B cell (primary cell): ENCODE measurements at regions of chr6 and their contacts with region 1.

Region 1: GRCh38 chr6:13979284-13980171 is 54.8 kb downstream of the RNF182 start:
- DNase-seq: no peak
- ATAC-seq: no peak
- H3K4me3 ChIP-seq: no peak overlapping the region
- H3K4me3 Mint-ChIP-seq: no peak overlapping the region
- H3K27ac ChIP-seq: no peak overlapping the region
- H3K27ac Mint-ChIP-seq: no peak overlapping the region
- H3K4me1 ChIP-seq: no peaks in the 10 kb centered on the region
- H3K4me1 Mint-ChIP-seq: no peaks in the 10 kb centered on the region
- H3K27me3 ChIP-seq: peaks cover 0 to 13% (median 6%) of the 10 kb centered on the region in 4 experiments
- H3K27me3 Mint-ChIP-seq: peaks cover 46% of the 10 kb centered on the region
- CTCF ChIP-seq: no peak

Region 2: GRCh38 chr6:13653296-13653695 is 326.2 kb before region 1 on chr6:
- CTCF ChIA-PET with region 1: no interaction called
- POLR2A ChIA-PET with region 1: no interaction called
- intact Hi-C with region 1: no loop called
- DNase-seq: no peak
- ATAC-seq: no peak
- H3K4me3 ChIP-seq: no peak overlapping the region
- H3K4me3 Mint-ChIP-seq: no peak overlapping the region
- H3K27ac ChIP-seq: no peak overlapping the region
- H3K27ac Mint-ChIP-seq: no peak overlapping the region
- H3K4me1 ChIP-seq: no peaks in the 10 kb centered on the region
- H3K4me1 Mint-ChIP-seq: peaks cover 6% of the 10 kb centered on the region
- H3K27me3 ChIP-seq: no peaks in the 10 kb centered on the region
- H3K27me3 Mint-ChIP-seq: no peaks in the 10 kb centered on the region
- CTCF ChIP-seq: no peak

Region 3: GRCh38 chr6:13947611-13948178 is 31.8 kb before region 1 on chr6:
- CTCF ChIA-PET with region 1: no interaction called
- POLR2A ChIA-PET with region 1: no interaction called
- intact Hi-C with region 1: loop called (anchors 5 kb)
- DNase-seq: no peak
- ATAC-seq: no peak
- H3K4me3 ChIP-seq: no peak overlapping the region
- H3K4me3 Mint-ChIP-seq: no peak overlapping the region
- H3K27ac ChIP-seq: no peak overlapping the region
- H3K27ac Mint-ChIP-seq: no peak overlapping the region
- H3K4me1 ChIP-seq: no peaks in the 10 kb centered on the region
- H3K4me1 Mint-ChIP-seq: no peaks in the 10 kb centered on the region
- H3K27me3 ChIP-seq: peaks cover 0 to 3% (median 2%) of the 10 kb centered on the region in 4 experiments
- H3K27me3 Mint-ChIP-seq: peaks cover 21% of the 10 kb centered on the region
- CTCF ChIP-seq: no peak